Activated CD4-positive, alpha-beta memory T cell treated with anti-CD3 and anti-CD28 coated beads for 36 hours (primary cell): ENCODE measurements at regions of chr6 and their contacts with region 1.

Region 1: DNA sequence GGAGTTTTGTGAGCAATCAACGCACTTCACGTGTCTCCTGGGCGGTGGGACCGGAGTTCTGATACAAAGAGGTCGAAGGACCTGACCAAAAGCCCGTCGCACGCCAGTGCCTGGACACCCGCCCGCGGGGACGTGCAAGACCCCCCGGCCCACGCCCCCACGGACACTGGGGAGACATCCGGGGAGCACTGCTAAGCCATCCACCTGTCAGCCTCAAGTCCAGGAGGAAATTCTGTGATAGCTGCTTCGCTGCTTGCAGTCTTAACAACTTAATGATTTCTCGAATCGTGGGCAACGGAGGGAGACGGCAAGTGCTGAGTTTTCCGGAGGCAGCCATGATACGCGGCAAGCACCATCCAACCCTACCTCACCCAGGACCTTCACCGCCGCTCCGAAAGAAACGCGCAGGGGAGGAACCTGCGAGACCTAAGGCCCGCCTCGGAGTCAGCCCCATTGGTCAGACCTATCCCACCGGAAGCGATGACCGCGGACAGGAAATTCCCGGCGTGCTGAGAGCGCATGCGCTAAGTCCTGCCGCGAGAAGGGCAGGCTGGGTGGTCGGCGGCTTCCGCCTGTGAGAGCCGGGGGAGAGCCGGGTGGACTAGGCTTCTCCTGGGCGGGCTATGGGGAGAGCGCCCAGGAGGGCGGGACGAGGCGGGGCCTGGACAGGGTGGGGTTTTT is at the start of gene TFB1M:
- DNase-seq: peak; percentile 99
- H3K4me3 Mint-ChIP-seq: peak within 1 kb of the TSS; percentile 98
- H3K27ac Mint-ChIP-seq: peak within 1 kb of the TSS; percentile 96
- H3K4me1 Mint-ChIP-seq: peaks cover 38% of the 10 kb centered on the region
- H3K27me3 Mint-ChIP-seq: no peaks in the 10 kb centered on the region
- total RNA-seq, gene TFB1M: 45.1 to 48.5 TPM

Region 2: GRCh38 chr6:154247119-154247861 is 1066.9 kb before region 1 on chr6:
- CTCF ChIA-PET with region 1: no interaction called
- POLR2A ChIA-PET with region 1: no interaction called
- intact Hi-C with region 1: loop called (anchors 10 kb)
- DNase-seq: peak; percentile 55
- H3K4me3 Mint-ChIP-seq: peak overlapping the region; percentile 87
- H3K27ac Mint-ChIP-seq: peak overlapping the region; percentile 79
- H3K4me1 Mint-ChIP-seq: peaks cover 80% of the 10 kb centered on the region
- H3K27me3 Mint-ChIP-seq: no peaks in the 10 kb centered on the region

Region 3: DNA sequence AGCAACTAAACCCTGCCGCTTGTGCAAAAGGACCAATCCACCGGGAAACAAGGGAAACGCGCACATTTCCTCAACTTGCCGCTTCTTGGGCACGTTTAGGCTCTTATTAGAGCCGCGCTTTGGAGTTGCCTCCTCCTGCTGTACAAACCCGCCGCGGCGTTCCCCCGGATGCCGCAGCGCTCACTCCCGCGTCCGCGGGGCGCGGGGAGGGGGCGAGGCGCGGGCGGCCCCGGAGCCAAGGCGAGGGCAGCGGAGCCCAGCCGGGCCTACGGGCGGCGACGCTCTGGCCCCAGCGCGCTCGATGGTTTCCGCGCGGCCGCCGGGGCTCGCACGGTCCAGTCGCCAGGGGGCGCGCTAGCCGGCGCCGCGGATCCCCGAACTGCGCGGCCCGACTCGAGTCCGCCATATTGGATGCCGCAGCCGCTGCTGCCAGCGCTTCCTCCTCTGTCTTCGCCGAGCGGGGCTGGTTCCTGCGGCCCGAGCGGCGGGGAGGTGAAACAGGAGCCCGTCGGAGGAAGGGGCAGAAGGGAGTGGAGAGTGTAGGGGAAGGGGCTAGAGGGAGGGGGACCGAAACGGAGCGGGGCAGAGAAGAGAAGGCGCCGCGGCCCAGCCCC is 581.1 kb before region 1 on chr6 and contains the start of gene SCAF8:
- CTCF ChIA-PET with region 1: no interaction called
- POLR2A ChIA-PET with region 1: no interaction called
- intact Hi-C with region 1: loop called (anchors 2 kb)
- DNase-seq: peak; percentile 86
- H3K4me3 Mint-ChIP-seq: peak within 1 kb of the TSS; percentile 85
- H3K27ac Mint-ChIP-seq: peak within 1 kb of the TSS; percentile 84
- H3K4me1 Mint-ChIP-seq: peaks cover 34% of the 10 kb centered on the region
- H3K27me3 Mint-ChIP-seq: no peaks in the 10 kb centered on the region
- total RNA-seq, gene SCAF8: 30.1 to 31.7 TPM

Region 4: DNA sequence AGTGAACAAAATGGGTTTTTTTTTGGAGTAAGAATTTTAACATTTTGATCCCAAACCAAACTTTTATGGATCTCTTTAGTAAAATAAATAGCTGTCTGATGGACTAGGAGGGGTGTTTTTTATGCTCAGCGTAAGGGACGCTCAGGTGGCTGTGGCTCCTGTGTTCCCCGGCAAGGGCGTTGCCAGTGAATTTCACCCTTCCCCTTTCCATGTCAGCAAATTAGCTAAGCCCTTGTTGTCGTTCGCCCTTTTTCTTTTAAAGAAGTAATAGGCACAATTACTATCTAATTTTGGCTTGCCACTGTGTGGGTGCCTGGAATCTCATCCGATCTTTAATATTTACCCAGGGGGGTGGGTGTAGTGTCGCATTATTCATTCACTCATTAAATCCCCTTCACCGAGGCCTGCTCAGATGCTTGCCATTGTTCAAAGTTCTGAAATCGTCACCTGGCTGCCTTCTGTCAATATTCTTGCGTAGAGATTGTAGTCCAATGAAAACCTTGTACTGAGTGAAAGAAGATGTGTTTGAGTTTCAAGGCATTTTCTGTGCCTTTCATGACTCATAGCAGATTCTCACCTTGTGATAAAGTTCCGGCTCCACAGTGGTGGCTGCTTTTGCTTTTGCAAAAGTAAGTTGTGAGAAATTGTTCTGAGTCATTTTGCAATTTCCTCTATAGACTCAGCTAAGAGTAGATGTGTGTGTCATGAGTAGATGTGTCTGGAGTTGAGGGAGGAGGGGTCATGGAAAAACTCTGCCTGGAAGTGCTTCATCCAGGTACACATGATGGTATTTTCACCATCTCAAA is 90.4 kb before region 1 on chr6:
- CTCF ChIA-PET with region 1: no interaction called
- POLR2A ChIA-PET with region 1: no interaction called
- intact Hi-C with region 1: loop called (anchors 1 kb)
- DNase-seq: peak; percentile 78
- H3K4me3 Mint-ChIP-seq: peak overlapping the region; percentile 40
- H3K27ac Mint-ChIP-seq: peak overlapping the region; percentile 75
- H3K4me1 Mint-ChIP-seq: peaks cover 17% of the 10 kb centered on the region
- H3K27me3 Mint-ChIP-seq: peaks cover 6% of the 10 kb centered on the region

Region 5: GRCh38 chr6:155523821-155524651 is 209.8 kb after region 1 on chr6:
- CTCF ChIA-PET with region 1: interaction called, 5 read pairs
- POLR2A ChIA-PET with region 1: interaction called, 4 read pairs
- intact Hi-C with region 1: loop called (anchors 1 kb)
- DNase-seq: peak; percentile 55
- H3K4me3 Mint-ChIP-seq: no peak overlapping the region
- H3K27ac Mint-ChIP-seq: peak overlapping the region; percentile 90
- H3K4me1 Mint-ChIP-seq: peaks cover 34% of the 10 kb centered on the region
- H3K27me3 Mint-ChIP-seq: peaks cover 1% of the 10 kb centered on the region

Region 6: GRCh38 chr6:156686995-156687788 is 1373.0 kb after region 1 on chr6:
- CTCF ChIA-PET with region 1: no interaction called
- POLR2A ChIA-PET with region 1: no interaction called
- intact Hi-C with region 1: loop called (anchors 10 kb)
- DNase-seq: peak; percentile 77
- H3K4me3 Mint-ChIP-seq: peak overlapping the region; percentile 77
- H3K27ac Mint-ChIP-seq: peak overlapping the region; percentile 73
- H3K4me1 Mint-ChIP-seq: peaks cover 24% of the 10 kb centered on the region
- H3K27me3 Mint-ChIP-seq: no peaks in the 10 kb centered on the region

Region 7: DNA sequence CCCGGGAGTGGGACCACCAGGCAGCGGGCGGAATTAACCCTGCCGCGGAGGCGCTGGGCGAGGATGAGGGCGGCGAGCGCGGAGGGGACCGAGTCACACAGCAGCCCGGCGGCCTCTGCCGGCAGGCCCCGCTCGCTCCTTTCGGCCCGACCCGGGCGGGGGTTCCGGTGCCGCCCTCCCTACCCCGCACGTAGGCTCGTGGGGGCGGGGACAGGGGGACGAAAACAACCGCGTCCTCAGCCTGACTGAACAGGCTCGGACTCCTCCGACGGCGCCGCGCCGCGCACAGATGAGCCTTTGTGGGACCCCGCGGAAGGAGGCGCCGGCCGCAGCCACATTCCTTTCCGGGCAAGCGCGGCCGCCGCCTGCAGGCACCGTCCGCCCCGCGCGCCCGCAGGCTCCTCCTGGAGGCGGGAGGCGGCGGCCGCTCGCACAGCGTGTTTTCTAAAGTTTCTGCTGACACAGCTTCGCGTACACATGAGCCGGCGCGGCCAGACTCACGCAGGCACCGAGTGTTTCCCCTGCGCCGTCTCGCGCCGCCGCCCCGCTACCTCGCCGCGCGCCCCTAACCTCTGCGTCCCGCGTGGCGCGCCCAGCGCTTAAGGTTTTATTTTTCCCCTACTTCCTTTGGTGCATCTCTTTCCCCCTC is 1707.2 kb after region 1 on chr6:
- CTCF ChIA-PET with region 1: no interaction called
- POLR2A ChIA-PET with region 1: interaction called, 3 read pairs
- intact Hi-C with region 1: loop called (anchors 2 kb)
- DNase-seq: peak; percentile 93
- H3K4me3 Mint-ChIP-seq: peak overlapping the region; percentile 87
- H3K27ac Mint-ChIP-seq: peak overlapping the region; percentile 99
- H3K4me1 Mint-ChIP-seq: peaks cover 47% of the 10 kb centered on the region
- H3K27me3 Mint-ChIP-seq: no peaks in the 10 kb centered on the region